H1 (cell line): ENCODE measurements at regions of chr6 and their contacts with region 1.

Region 1: DNA sequence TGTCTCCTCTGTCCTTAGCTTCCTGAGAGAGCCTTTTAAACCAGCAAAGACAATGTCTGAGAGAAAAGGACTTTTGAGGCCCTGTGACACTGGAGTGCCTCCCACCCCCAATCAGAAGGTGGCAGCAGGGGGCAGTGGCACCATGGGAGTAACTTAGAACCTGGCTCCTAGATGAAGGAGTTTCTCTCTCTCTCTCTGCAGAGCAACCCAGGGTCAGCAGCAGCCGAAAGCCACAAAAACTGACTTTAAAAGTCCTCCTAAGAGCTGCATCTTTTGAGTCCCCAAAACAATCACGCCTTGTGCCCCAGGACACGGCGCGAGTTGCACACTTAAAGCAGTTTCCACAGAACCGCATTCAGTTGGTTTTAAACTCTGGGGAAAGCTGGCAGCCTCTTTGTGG is 5.3 kb upstream of the TCP11 start:
- DNase-seq: peak in 1 of 2 experiments; percentile 54
- H3K4me3 ChIP-seq: no peak overlapping the region
- H3K27ac ChIP-seq: no peak overlapping the region
- H3K4me1 ChIP-seq: peaks cover 0 to 10% (median 7%) of the 10 kb centered on the region in 4 experiments; a peak in 5 of 7 replicates
- H3K27me3 ChIP-seq: peaks cover 0 to 19% (median 13%) of the 10 kb centered on the region in 4 experiments; a peak in 6 of 7 replicates
- CTCF ChIP-seq: peak; percentile 55 to 63 (median 61)
- EP300 ChIP-seq: no peak
- POLR2A ChIP-seq: no peak
- RAD21 ChIP-seq: peak; percentile 73 to 85

Region 2: DNA sequence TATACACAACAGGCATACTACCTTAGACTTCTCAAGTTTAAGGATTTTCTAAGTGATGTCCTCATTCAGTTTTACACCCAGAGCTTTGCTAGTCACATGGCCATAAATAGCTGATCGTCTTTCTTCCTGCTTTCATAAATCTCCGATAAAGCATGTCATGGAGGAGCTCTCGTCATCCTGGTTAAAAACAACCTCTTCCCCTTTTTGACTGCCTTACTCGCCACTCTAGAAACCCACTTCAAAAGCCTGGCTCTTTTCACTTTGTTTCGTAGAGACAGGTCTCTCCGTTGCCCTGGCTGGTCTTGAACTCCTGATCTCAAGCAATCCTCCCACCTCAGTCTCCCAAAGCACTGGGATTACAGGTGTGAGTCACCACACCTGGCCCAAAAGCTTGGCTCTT is 830.7 kb before region 1 on chr6:
- CTCF ChIA-PET with region 1: no interaction called
- POLR2A ChIA-PET with region 1: no interaction called
- DNase-seq: no peak
- H3K4me3 ChIP-seq: no peak overlapping the region
- H3K27ac ChIP-seq: no peak overlapping the region
- H3K4me1 ChIP-seq: peaks cover 0 to 11% (median 6%) of the 10 kb centered on the region in 4 experiments; a peak in 4 of 7 replicates
- H3K27me3 ChIP-seq: no peaks in the 10 kb centered on the region
- CTCF ChIP-seq: no peak
- EP300 ChIP-seq: no peak
- POLR2A ChIP-seq: no peak
- RAD21 ChIP-seq: no peak

Region 3: DNA sequence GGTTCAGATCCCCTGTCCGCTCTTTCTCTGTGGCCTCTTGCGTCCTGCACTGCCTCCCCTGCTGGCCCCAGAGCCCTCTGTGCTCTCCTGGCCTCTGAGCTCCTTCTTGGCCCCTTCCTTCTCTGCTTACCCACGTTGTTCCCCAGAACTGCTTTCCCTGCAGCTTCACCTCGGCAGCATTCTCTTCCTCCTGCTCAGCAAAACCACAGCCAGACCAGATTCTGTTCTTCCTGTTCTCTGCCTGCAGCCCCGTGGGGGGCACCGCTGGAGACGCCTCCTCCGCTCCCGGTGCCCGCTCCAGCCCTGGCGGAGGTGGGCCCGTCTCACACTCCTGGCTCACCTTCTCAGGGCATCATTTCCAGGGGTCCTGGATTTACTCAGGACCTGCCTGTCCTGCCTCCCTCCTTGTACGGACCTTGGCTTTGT is 65.0 kb before region 1 on chr6:
- CTCF ChIA-PET with region 1: no interaction called
- POLR2A ChIA-PET with region 1: no interaction called
- DNase-seq: no peak
- H3K4me3 ChIP-seq: no peak overlapping the region
- H3K27ac ChIP-seq: no peak overlapping the region
- H3K4me1 ChIP-seq: peaks cover 0 to 10% (median 4%) of the 10 kb centered on the region in 4 experiments; a peak in 3 of 7 replicates
- H3K27me3 ChIP-seq: no peaks in the 10 kb centered on the region
- CTCF ChIP-seq: no peak
- EP300 ChIP-seq: no peak
- POLR2A ChIP-seq: no peak
- RAD21 ChIP-seq: no peak

Region 4: GRCh38 chr6:35173427-35174087 is 27.1 kb after region 1 on chr6:
- CTCF ChIA-PET with region 1: interaction called, 35 read pairs
- POLR2A ChIA-PET with region 1: interaction called, 4 read pairs
- DNase-seq: no peak
- H3K4me3 ChIP-seq: no peak overlapping the region
- H3K27ac ChIP-seq: no peak overlapping the region
- H3K4me1 ChIP-seq: no peaks in the 10 kb centered on the region; a peak in 2 of 7 replicates
- H3K27me3 ChIP-seq: peaks cover 0 to 2% (median 0%) of the 10 kb centered on the region in 4 experiments; a peak in 2 of 7 replicates
- CTCF ChIP-seq: no peak
- EP300 ChIP-seq: no peak
- POLR2A ChIP-seq: no peak
- RAD21 ChIP-seq: no peak

Region 5: GRCh38 chr6:35181933-35182612 is 35.6 kb after region 1 on chr6:
- CTCF ChIA-PET with region 1: interaction called, 35 read pairs
- POLR2A ChIA-PET with region 1: no interaction called
- DNase-seq: peak in 1 of 2 experiments; percentile 64
- H3K4me3 ChIP-seq: peak overlapping the region in 1 of 4 experiments; percentile 46; a peak in 3 of 8 replicates
- H3K27ac ChIP-seq: no peak overlapping the region
- H3K4me1 ChIP-seq: peaks cover 0 to 5% (median 4%) of the 10 kb centered on the region in 4 experiments; a peak in 5 of 7 replicates
- H3K27me3 ChIP-seq: peaks cover 0 to 14% (median 4%) of the 10 kb centered on the region in 4 experiments; a peak in 4 of 7 replicates
- CTCF ChIP-seq: no peak
- EP300 ChIP-seq: no peak
- POLR2A ChIP-seq: no peak
- RAD21 ChIP-seq: no peak

Region 6: DNA sequence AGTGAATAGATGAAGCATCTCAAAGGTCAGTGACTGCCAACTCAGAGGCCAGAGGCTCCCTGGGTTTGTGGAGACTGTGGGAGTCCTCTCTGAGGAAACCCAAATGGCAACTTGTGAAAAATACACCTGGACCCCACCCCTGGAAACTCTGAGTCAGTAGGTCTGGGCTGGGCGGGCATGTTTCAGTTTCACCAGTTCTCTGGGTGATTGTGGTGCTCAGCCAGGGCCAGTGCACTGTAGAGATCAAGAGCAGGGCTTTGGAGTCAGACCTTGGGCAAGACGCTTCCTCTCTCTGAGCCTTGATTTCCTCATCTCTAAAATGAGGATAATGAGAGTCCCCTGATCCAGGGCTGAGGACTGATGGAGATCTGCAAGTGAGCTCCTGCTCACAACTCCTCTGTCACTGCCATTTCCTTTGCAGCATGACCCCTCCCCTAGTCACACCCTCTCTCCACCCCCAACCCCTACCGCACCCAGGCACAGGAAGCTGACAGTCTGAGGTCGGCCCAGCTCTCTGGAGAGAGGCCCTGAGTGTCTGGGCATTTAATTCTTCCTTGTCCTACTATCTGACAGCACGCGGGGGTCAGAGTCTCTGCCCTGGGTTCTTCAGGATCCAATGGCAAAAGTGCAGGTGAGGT is 156.3 kb after region 1 on chr6:
- CTCF ChIA-PET with region 1: no interaction called
- POLR2A ChIA-PET with region 1: no interaction called
- DNase-seq: peak in 1 of 2 experiments; percentile 64
- H3K4me3 ChIP-seq: no peak overlapping the region
- H3K27ac ChIP-seq: no peak overlapping the region
- H3K4me1 ChIP-seq: peaks cover 6 to 15% (median 12%) of the 10 kb centered on the region in 4 experiments
- H3K27me3 ChIP-seq: no peaks in the 10 kb centered on the region
- CTCF ChIP-seq: no peak
- EP300 ChIP-seq: no peak
- POLR2A ChIP-seq: no peak
- RAD21 ChIP-seq: no peak

Region 7: GRCh38 chr6:35469704-35470662 is 323.5 kb after region 1 on chr6:
- CTCF ChIA-PET with region 1: no interaction called
- POLR2A ChIA-PET with region 1: no interaction called
- DNase-seq: no peak
- H3K4me3 ChIP-seq: peak overlapping the region; percentile 86 to 99 (median 92)
- H3K27ac ChIP-seq: peak overlapping the region; percentile 22; the same call in 1 of the 2 replicates
- H3K4me1 ChIP-seq: peaks cover 0 to 8% (median 5%) of the 10 kb centered on the region in 4 experiments; a peak in 6 of 7 replicates
- H3K27me3 ChIP-seq: no peaks in the 10 kb centered on the region; a peak in 1 of 7 replicates
- CTCF ChIP-seq: no peak
- EP300 ChIP-seq: no peak
- POLR2A ChIP-seq: peak in 1 of 2 experiments; percentile 34; a peak in 2 of 3 replicates
- RAD21 ChIP-seq: no peak